A549 (cell line): ENCODE measurements at regions of chr6 and their contacts with region 1.

Region 1: GRCh38 chr6:88870717-88871330 is 92.6 kb downstream of the RNGTT start:
- DNase-seq: peak; percentile 3 to 49
- ATAC-seq: no peak
- H3K4me3 ChIP-seq: no peak overlapping the region
- H3K27ac ChIP-seq: no peak overlapping the region
- H3K4me1 ChIP-seq: peaks cover 33% of the 10 kb centered on the region
- CTCF ChIP-seq: peak; percentile 68
- EP300 ChIP-seq: no peak
- POLR2A ChIP-seq: no peak
- RAD21 ChIP-seq: peak; percentile 76 to 80

Region 2: DNA sequence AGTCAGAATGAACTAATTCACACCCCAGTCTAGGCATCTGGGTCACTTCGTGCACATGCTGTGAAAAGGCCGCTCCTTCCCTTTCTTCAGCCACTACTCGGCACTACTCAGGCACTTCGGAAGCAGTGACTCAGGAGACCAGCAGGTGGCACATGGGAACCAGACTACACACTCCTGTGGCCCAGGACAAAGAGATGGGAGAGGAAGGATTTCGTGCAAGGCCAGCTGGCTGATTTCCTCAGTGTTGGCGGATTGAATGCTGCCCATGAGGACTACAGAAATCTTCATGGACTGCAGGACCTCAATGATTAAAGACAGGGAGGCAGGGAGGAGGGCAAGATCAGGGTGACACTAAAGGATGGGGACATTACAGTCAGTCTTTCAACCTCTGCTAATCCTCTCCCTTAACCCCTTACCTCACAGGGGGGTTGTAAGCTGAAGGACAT is 941.0 kb before region 1 on chr6:
- CTCF ChIA-PET with region 1: interaction called, 14 read pairs
- POLR2A ChIA-PET with region 1: no interaction called
- DNase-seq: peak; percentile 74 to 75
- ATAC-seq: peak; percentile 100
- H3K4me3 ChIP-seq: no peak overlapping the region
- H3K27ac ChIP-seq: peak overlapping the region; percentile 16 to 73; a peak in 4 of 6 replicates
- H3K4me1 ChIP-seq: peaks cover 3% of the 10 kb centered on the region; the same call in 1 of the 3 replicates
- CTCF ChIP-seq: peak; percentile 68
- EP300 ChIP-seq: no peak
- POLR2A ChIP-seq: no peak
- RAD21 ChIP-seq: peak; percentile 84 to 91

Region 3: DNA sequence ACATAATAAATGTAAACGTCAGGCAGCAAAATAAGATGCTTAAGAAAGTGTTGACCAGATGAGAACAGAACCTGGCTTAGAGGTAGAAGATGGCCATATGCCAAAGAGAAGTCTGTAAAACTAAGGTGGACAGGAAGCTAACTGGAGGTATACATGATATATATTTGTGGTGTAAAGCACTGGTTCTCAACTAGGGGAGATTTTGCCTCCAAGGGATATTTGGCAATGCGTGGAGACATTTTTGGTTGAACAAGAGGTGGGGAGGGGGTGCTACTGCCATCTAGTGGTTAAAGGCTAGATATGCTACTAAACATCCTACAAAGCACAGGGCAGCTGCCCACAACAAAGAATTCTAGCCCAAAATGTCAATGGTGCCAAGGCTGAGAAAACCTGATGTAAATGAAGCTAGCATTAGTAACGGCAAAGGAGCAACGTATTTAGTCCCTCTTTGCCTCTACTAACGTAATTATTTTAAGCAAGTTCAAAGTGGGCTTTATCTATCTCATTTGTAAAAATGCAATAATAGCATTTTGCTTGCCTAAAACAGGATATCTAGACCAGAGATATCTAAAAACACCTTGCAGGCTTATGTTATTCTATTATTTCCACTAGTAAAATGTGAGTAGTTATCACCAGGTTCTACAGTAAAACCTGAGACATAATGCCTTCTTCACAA is 90.0 kb before region 1 on chr6:
- CTCF ChIA-PET with region 1: interaction called, 11 read pairs
- POLR2A ChIA-PET with region 1: no interaction called
- DNase-seq: peak in 1 of 2 experiments; percentile 61
- ATAC-seq: peak; percentile 71 to 79; a peak in 5 of 6 replicates
- H3K4me3 ChIP-seq: no peak overlapping the region
- H3K27ac ChIP-seq: no peak overlapping the region
- H3K4me1 ChIP-seq: no peaks in the 10 kb centered on the region
- CTCF ChIP-seq: peak; percentile 63
- EP300 ChIP-seq: no peak
- POLR2A ChIP-seq: no peak
- RAD21 ChIP-seq: peak; percentile 69 to 70